Naive thymus-derived CD4-positive, alpha-beta T cell (primary cell): ENCODE measurements at regions of chr1 and their contacts with region 1.

Region 1: DNA sequence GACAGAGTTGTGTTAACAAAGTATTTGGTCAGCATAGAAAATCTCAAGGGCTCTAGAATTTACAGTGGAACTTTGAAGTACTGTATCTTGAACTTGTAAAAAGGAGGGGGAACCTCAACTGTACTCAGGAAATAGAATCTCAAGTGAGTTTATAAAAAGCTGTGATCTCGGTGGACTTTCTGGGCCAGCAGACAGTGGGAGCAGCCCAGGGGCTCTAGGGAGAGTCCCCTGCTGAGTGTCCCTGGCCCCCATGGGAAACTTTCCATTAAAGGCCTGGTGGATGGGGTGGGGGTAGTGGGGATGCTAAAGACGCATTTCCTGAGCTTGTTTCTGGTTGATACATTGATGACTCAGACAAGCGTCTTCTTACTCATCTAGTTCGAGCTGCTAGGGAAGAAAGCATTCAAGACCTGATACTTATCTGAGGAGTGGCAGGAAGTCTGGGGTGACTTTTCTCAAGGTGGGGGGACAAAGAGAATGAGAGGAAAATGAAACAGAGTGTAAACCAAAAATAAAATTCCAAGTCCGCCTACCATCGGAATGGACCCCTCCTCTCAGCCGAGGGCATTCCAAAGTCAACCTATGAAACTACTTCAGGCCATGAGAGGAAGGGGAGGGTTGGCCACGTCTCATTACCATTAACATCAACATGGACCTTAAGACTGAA is 65.5 kb downstream of the NID1 start:
- DNase-seq: peak in 8 of 9 donors; percentile 7 to 75 (median 37)
- ATAC-seq: peak; percentile 90
- H3K4me3 ChIP-seq: no peak overlapping the region
- H3K4me3 Mint-ChIP-seq: peak overlapping the region in 9 of 10 donors; percentile 0 to 71 (median 55)
- H3K27ac ChIP-seq: peak overlapping the region; percentile 22
- H3K27ac Mint-ChIP-seq: peak overlapping the region; percentile 19 to 97 (median 80)
- H3K4me1 ChIP-seq: peaks cover 10 to 31% of the 10 kb centered on the region in 2 donors
- H3K4me1 Mint-ChIP-seq: peaks cover 10 to 71% (median 20%) of the 10 kb centered on the region in 7 donors
- H3K27me3 ChIP-seq: no peaks in the 10 kb centered on the region
- H3K27me3 Mint-ChIP-seq: no peaks in the 10 kb centered on the region

Region 2: DNA sequence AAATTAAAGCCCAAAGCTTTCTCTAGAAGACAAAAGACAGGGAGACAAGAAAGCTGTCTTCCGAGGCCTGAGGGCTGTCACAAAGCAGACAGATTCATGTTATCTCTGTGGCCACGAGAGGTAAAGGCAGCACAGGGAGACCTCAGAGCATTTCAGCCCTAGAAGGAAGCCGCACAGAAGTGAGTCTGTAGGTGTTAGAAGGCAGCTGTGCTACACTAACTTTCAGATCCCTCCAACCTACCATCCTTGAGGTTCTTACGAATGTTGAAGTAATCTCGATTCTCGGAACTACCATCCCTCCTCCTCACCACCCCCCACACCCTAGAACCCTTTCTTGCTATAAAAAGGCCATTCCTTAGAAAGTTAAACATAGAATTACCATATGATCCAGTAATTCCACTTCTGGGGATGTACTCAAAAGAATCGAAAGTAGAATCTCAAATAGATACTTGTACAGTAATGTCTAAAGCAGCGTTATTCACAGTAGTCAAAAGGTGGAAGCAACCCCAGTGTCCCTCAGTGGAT is 111.2 kb before region 1 on chr1:
- CTCF ChIA-PET with region 1: no interaction called
- POLR2A ChIA-PET with region 1: no interaction called
- intact Hi-C with region 1: loop called in 1 of 2 experiments (anchors 1 kb)
- DNase-seq: peak in 8 of 9 donors; percentile 9 to 54 (median 36)
- ATAC-seq: peak; percentile 90
- H3K4me3 ChIP-seq: peak overlapping the region; percentile 6
- H3K4me3 Mint-ChIP-seq: peak overlapping the region; percentile 49 to 89 (median 84)
- H3K27ac ChIP-seq: peak overlapping the region; percentile 70
- H3K27ac Mint-ChIP-seq: peak overlapping the region; percentile 86 to 98 (median 95)
- H3K4me1 ChIP-seq: peaks cover 0 to 22% of the 10 kb centered on the region in 2 donors
- H3K4me1 Mint-ChIP-seq: peaks cover 8 to 50% (median 21%) of the 10 kb centered on the region in 7 donors
- H3K27me3 ChIP-seq: no peaks in the 10 kb centered on the region
- H3K27me3 Mint-ChIP-seq: no peaks in the 10 kb centered on the region

Region 3: GRCh38 chr1:235979716-235980333 is 19.6 kb before region 1 on chr1:
- CTCF ChIA-PET with region 1: no interaction called
- POLR2A ChIA-PET with region 1: no interaction called
- intact Hi-C with region 1: no loop called
- DNase-seq: no peak
- ATAC-seq: no peak
- H3K4me3 ChIP-seq: no peak overlapping the region
- H3K4me3 Mint-ChIP-seq: no peak overlapping the region
- H3K27ac ChIP-seq: no peak overlapping the region
- H3K27ac Mint-ChIP-seq: no peak overlapping the region
- H3K4me1 ChIP-seq: no peaks in the 10 kb centered on the region
- H3K4me1 Mint-ChIP-seq: peaks cover 0 to 3% (median 0%) of the 10 kb centered on the region in 7 donors
- H3K27me3 ChIP-seq: no peaks in the 10 kb centered on the region
- H3K27me3 Mint-ChIP-seq: peaks cover 4 to 25% (median 5%) of the 10 kb centered on the region in 5 donors

Region 4: DNA sequence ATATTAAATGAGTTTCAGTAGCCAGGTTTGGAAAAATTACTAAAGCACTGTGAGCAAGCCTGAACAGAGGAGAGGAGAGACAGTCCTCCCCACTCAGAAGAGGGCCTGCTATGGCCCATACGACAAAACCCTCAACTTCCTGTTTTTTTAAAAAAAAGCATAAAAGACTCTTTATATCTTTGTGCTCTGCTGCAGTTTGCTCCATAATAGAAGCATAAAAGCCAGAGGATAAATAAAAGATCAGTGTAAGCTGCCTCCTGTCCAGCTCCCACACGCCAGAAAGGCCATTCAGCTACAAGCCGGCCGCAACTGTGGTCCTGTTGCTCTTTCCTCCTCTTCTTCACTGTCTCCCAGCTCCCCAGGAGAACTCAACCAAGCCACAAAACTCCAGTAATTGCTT is 27.7 kb after region 1 on chr1:
- CTCF ChIA-PET with region 1: no interaction called
- POLR2A ChIA-PET with region 1: no interaction called
- intact Hi-C with region 1: loop called in 1 of 2 experiments (anchors 1 kb)
- DNase-seq: peak in 4 of 9 donors; percentile 5 to 14 (median 9)
- ATAC-seq: no peak
- H3K4me3 ChIP-seq: no peak overlapping the region
- H3K4me3 Mint-ChIP-seq: peak overlapping the region in 3 of 10 donors; percentile 12 to 49 (median 29)
- H3K27ac ChIP-seq: no peak overlapping the region
- H3K27ac Mint-ChIP-seq: peak overlapping the region in 4 of 9 donors; percentile 16 to 59 (median 48)
- H3K4me1 ChIP-seq: peaks cover 4 to 10% of the 10 kb centered on the region in 2 donors
- H3K4me1 Mint-ChIP-seq: peaks cover 8 to 18% (median 15%) of the 10 kb centered on the region in 7 donors
- H3K27me3 ChIP-seq: no peaks in the 10 kb centered on the region
- H3K27me3 Mint-ChIP-seq: no peaks in the 10 kb centered on the region

Region 5: DNA sequence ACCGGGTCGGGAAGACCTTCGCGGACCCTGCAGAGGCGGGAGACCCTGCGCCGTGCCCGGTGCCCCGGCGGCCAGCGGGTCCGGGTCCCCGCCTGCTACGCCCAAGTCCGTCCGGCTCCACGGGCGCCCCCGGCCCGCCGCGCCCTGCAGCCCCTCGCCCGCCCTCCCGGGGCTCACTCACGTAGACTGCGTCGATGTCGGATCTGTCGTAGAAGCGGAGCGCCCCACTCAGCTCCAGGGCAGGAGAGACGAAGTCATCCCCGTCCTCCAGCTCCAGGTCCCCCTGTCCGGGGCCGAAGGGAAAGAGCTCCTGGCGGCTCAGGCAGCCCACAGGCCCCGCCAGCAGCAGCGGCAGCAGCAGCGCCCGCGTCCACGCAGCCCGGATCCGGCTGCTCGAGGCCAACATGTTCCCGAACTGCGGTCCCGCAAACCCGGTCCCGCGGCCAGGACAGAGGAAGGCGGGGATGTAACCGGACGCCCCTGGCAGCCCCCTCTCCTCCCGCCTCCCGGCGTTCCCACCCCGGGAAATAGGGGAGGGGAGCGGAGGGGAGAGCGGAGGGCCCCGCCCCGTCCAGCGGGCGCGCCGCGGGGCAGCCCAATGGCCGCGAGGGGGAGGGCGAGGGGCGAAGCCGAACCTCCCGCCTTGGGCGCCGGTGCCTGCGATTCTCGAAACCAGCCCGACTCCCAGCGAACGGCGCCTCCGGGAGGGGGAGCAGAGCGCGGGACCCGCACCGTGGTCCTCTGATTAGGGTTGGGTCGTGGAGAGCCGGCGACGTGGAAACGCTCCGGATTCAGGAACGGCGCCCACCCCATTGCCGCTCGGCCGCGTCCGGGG is 65.5 kb after region 1 on chr1 and contains the start of gene NID1:
- CTCF ChIA-PET with region 1: no interaction called
- POLR2A ChIA-PET with region 1: no interaction called
- intact Hi-C with region 1: loop called (anchors 1 to 2 kb)
- DNase-seq: peak in 7 of 9 donors; percentile 0 to 46 (median 8)
- ATAC-seq: peak; percentile 36
- H3K4me3 ChIP-seq: peak within 1 kb of the TSS; percentile 58
- H3K4me3 Mint-ChIP-seq: peak within 1 kb of the TSS; percentile 56 to 77 (median 66)
- H3K27ac ChIP-seq: no peak within 1 kb of the TSS
- H3K27ac Mint-ChIP-seq: no peak within 1 kb of the TSS
- H3K4me1 ChIP-seq: peaks cover 12 to 19% of the 10 kb centered on the region in 2 donors
- H3K4me1 Mint-ChIP-seq: peaks cover 15 to 29% (median 20%) of the 10 kb centered on the region in 7 donors
- H3K27me3 ChIP-seq: peaks cover 4 to 17% of the 10 kb centered on the region in 2 donors
- H3K27me3 Mint-ChIP-seq: peaks cover 33 to 63% (median 44%) of the 10 kb centered on the region in 5 donors
- total RNA-seq, gene NID1: 0.11 to 6.2 (median 0.22) TPM

Region 6: GRCh38 chr1:236185692-236186091 is 186.3 kb after region 1 on chr1:
- CTCF ChIA-PET with region 1: no interaction called
- POLR2A ChIA-PET with region 1: no interaction called
- intact Hi-C with region 1: no loop called
- DNase-seq: peak in 1 of 9 donors; percentile 4
- ATAC-seq: no peak
- H3K4me3 ChIP-seq: no peak overlapping the region
- H3K4me3 Mint-ChIP-seq: no peak overlapping the region
- H3K27ac ChIP-seq: no peak overlapping the region
- H3K27ac Mint-ChIP-seq: no peak overlapping the region
- H3K4me1 ChIP-seq: no peaks in the 10 kb centered on the region
- H3K4me1 Mint-ChIP-seq: peaks cover 0 to 5% (median 4%) of the 10 kb centered on the region in 7 donors
- H3K27me3 ChIP-seq: no peaks in the 10 kb centered on the region
- H3K27me3 Mint-ChIP-seq: no peaks in the 10 kb centered on the region